PC-9 (cell line): ENCODE measurements at regions of chr1 and their contacts with region 1.

Region 1: DNA sequence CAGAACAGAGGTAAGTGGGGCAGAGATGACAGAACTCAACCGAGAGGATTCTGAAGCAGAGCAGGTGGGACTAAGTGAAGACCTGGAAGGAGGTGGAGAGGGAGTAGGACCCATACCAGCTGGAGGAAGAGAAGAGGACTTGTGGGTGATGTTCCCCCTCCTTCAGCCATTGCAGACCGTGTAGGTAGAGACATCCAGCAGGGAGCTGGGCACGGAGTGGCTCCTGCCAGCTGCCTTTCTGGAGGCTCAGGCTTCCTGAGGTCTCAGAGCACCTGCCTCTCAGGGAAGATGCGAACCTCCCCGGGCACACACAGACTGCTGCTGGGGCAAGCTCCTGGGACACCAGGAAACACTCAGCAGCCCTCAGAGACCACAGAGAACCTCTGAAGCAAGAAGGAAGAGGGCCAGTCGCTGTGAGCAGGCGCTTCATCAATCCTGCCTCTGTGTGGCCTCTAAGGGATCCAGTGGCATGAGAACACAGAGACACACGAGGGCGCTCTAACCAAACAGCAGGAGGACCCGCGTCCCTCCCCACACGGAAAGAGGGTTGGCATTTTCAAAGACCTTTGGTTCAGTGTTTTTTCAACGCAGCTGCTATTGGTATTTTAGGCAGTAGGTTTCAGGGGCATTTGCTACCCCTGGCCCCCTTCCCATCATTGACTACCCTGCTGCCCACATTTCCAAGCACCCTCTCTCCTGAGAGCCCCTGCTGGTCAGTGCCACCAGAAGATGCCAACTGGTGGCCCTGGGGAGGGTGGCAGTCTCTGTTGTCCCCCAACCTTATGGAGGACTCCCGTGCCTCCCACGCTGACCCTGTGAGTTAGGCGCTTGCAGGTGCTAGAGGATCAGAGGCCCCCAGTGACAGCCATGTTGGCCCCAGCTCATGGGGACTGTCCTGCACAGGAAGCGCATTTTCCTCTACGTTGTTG is 89.6 kb upstream of the EDN2 start:
- DNase-seq: peak; percentile 58 to 80
- H3K4me3 ChIP-seq: no peak overlapping the region
- H3K27ac ChIP-seq: no peak overlapping the region
- H3K4me1 ChIP-seq: peaks cover 5% of the 10 kb centered on the region
- H3K27me3 ChIP-seq: no peaks in the 10 kb centered on the region
- CTCF ChIP-seq: peak; percentile 93

Region 2: GRCh38 chr1:41589395-41589794 is 15.3 kb after region 1 on chr1:
- CTCF ChIA-PET with region 1: no interaction called
- POLR2A ChIA-PET with region 1: no interaction called
- intact Hi-C with region 1: no loop called
- DNase-seq: no peak
- H3K4me3 ChIP-seq: no peak overlapping the region
- H3K27ac ChIP-seq: no peak overlapping the region
- H3K4me1 ChIP-seq: no peaks in the 10 kb centered on the region
- H3K27me3 ChIP-seq: no peaks in the 10 kb centered on the region
- CTCF ChIP-seq: no peak

Region 3: DNA sequence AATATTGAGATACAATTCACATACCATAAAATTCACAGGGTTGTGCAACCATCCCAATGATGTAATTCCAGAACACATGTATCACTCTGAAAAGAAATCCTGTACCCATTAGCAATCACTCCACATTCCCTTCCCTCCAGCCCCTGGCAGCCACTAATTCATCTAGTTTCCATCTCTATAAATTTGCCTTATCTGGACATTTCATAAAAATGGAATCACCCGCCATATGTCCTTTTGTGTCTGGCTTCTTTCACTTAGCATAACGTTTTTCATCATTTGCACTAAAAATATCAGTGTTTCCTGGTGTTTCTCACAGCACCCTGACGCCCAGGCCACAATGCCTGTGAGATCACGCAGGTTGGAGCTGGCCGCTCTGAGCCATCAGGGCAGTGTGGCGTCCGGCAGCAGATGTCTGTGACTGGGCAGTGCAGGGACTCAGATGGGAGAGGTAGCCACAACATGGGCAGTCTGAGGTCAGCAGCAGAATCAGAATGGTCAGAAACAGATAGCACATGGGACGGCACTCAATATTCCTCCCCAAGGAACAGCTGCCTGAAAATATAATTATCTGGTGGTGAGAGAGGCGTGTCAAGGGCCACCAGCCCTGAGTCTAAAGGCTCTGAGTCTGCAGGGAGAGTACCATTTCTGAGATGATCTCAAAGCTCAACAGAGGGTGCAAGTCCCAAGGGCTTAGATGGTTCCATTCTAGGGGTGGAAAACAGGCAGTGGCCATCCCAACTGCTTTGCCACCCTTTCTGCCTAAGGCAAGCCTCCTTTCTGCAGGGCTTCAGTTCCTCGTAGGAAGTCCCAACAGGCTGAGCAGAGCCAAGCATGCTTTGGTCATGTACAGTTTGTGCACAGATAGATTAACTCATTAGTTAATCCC is 39.9 kb after region 1 on chr1:
- CTCF ChIA-PET with region 1: no interaction called
- POLR2A ChIA-PET with region 1: no interaction called
- intact Hi-C with region 1: no loop called
- DNase-seq: no peak
- H3K4me3 ChIP-seq: no peak overlapping the region
- H3K27ac ChIP-seq: no peak overlapping the region
- H3K4me1 ChIP-seq: no peaks in the 10 kb centered on the region
- H3K27me3 ChIP-seq: no peaks in the 10 kb centered on the region
- CTCF ChIP-seq: no peak

Region 4: GRCh38 chr1:41662061-41662764 is 88.2 kb after region 1 on chr1:
- CTCF ChIA-PET with region 1: no interaction called
- POLR2A ChIA-PET with region 1: no interaction called
- intact Hi-C with region 1: loop called (anchors 5 kb)
- DNase-seq: peak in 1 of 2 experiments; percentile 63
- H3K4me3 ChIP-seq: peak overlapping the region; percentile 81; the same call in 1 of the 2 replicates
- H3K27ac ChIP-seq: no peak overlapping the region
- H3K4me1 ChIP-seq: peaks cover 53% of the 10 kb centered on the region
- H3K27me3 ChIP-seq: no peaks in the 10 kb centered on the region
- CTCF ChIP-seq: no peak

Region 5: GRCh38 chr1:41862384-41863174 is 288.5 kb after region 1 on chr1:
- CTCF ChIA-PET with region 1: no interaction called
- POLR2A ChIA-PET with region 1: no interaction called
- intact Hi-C with region 1: loop called (anchors 5 kb)
- DNase-seq: peak; percentile 74 to 95
- H3K4me3 ChIP-seq: 0 out of 2 replicates have a peak overlapping the region, but pooled peaks have one; percentile 1
- H3K27ac ChIP-seq: peak overlapping the region; percentile 75
- H3K4me1 ChIP-seq: peaks cover 65% of the 10 kb centered on the region
- H3K27me3 ChIP-seq: no peaks in the 10 kb centered on the region
- CTCF ChIP-seq: no peak

Region 6: GRCh38 chr1:41955461-41956159 is 381.6 kb after region 1 on chr1:
- CTCF ChIA-PET with region 1: no interaction called
- POLR2A ChIA-PET with region 1: interaction called, 7 read pairs
- intact Hi-C with region 1: loop called (anchors 10 kb)
- DNase-seq: peak; percentile 67 to 96
- H3K4me3 ChIP-seq: peak overlapping the region; percentile 9; the same call in 1 of the 2 replicates
- H3K27ac ChIP-seq: peak overlapping the region; percentile 89
- H3K4me1 ChIP-seq: peaks cover 62% of the 10 kb centered on the region
- H3K27me3 ChIP-seq: no peaks in the 10 kb centered on the region
- CTCF ChIP-seq: no peak

Region 7: DNA sequence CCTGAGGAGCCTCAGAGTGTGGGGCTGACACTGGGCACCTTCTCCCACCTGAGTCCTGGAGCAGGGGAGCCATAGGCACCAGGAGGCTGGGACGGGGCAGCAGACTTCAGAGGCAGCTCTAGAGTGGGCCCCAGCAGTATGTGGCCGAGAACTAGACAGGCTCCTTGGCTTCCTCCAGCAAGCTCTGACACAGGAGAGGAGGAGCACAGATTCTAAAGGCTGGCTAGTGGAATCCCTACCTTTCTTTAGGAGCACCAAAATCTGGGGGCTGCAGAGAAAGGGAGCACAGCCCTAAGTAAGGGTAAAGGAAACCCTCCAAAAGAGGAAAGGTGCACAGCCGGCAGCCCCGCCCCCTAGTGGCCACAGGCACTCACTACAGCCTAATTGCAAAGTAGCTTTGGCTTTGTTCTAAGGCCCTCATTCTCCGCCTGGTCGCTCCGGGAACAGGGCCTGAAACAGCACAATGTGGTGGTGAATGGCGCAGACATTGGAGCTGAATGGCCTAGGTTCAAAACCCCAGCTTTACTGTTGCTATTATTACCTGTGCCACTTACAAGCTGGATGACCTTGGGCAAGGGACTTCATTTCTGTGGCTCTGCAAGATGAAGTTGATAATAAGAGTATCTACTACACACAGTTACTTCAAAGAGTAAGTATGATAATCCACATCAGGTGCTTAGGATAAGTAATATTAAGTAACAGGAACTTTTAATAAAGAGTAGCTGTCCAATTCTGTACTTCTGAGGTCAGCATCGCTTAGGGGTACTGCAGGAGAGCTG is 599.3 kb after region 1 on chr1:
- CTCF ChIA-PET with region 1: no interaction called
- POLR2A ChIA-PET with region 1: no interaction called
- intact Hi-C with region 1: loop called (anchors 1 kb)
- DNase-seq: peak in 1 of 2 experiments; percentile 65
- H3K4me3 ChIP-seq: no peak overlapping the region
- H3K27ac ChIP-seq: 0 out of 2 replicates have a peak overlapping the region, but pooled peaks have one; percentile 1
- H3K4me1 ChIP-seq: peaks cover 47% of the 10 kb centered on the region
- H3K27me3 ChIP-seq: no peaks in the 10 kb centered on the region
- CTCF ChIP-seq: peak; percentile 98